ENCODE measurements at regions of chr18 and their contacts with region 1.

Region 1: GRCh38 chr18:75551071-75551470 is 123.6 kb upstream of the SMIM21 start:
- DNase-seq: no peak
- H3K4me3 ChIP-seq: no peak overlapping the region
- H3K4me1 ChIP-seq: no peaks in the 10 kb centered on the region
- H3K27me3 ChIP-seq: no peaks in the 10 kb centered on the region

Region 2: DNA sequence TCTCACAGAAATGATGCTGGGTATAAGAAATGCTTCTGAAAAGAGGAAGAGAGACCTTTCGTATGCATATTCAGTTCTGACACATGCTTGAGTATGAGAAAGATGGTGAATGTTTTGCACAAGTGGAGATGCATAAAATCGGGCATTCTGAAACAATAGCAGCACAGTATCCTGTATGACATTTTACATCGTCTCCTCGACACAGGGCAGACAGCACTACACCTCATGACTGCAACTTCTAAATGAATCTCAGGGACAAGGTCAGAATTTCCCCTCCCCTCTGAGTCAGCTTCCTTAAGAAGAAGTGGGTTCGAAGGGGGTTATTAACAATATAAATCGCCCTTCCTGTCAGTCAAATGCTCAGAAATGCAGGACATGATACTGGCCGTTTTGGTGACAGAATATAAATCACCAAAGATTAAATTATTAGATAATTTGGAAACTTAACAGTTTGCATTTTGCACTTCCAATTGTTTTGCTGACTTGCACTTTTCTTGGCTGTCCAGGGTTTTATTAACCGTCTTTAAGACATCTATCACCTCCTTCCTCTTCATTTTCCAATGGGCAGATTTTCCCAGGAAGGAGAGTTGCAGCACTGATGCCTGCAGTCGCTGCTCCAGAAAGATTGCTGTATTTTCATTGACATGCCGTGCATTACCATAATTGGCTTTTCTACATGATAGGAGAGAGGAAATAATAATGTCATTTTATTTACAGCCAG is 283.3 kb before region 1 on chr18:
- in situ Hi-C with region 1: no loop called
- DNase-seq: no peak
- H3K4me3 ChIP-seq: no peak overlapping the region
- H3K4me1 ChIP-seq: no peaks in the 10 kb centered on the region; the same call in 1 of the 2 replicates
- H3K27me3 ChIP-seq: no peaks in the 10 kb centered on the region

Region 3: GRCh38 chr18:75358928-75359327 is 192.1 kb before region 1 on chr18:
- in situ Hi-C with region 1: no loop called
- DNase-seq: no peak
- H3K4me3 ChIP-seq: no peak overlapping the region
- H3K4me1 ChIP-seq: no peaks in the 10 kb centered on the region
- H3K27me3 ChIP-seq: no peaks in the 10 kb centered on the region

Region 4: GRCh38 chr18:75455249-75456198 is 95.5 kb before region 1 on chr18:
- in situ Hi-C with region 1: loop called (anchors 25 kb)
- DNase-seq: no peak
- H3K4me3 ChIP-seq: no peak overlapping the region
- H3K4me1 ChIP-seq: no peaks in the 10 kb centered on the region
- H3K27me3 ChIP-seq: no peaks in the 10 kb centered on the region

Region 5: GRCh38 chr18:75863696-75864095 is 312.6 kb after region 1 on chr18:
- in situ Hi-C with region 1: no loop called
- DNase-seq: no peak
- H3K4me3 ChIP-seq: no peak overlapping the region
- H3K4me1 ChIP-seq: no peaks in the 10 kb centered on the region
- H3K27me3 ChIP-seq: no peaks in the 10 kb centered on the region

Region 6: GRCh38 chr18:76252880-76253279 is 701.8 kb after region 1 on chr18:
- in situ Hi-C with region 1: no loop called
- DNase-seq: no peak
- H3K4me3 ChIP-seq: no peak overlapping the region
- H3K4me1 ChIP-seq: no peaks in the 10 kb centered on the region
- H3K27me3 ChIP-seq: 0 out of 2 replicates have a peak, but pooled peaks cover 3% of the 10 kb centered on the region

Measured in HAP-1 (cell line).